ENCODE measurements at regions of chrX and their contacts with region 1.

Region 1: DNA sequence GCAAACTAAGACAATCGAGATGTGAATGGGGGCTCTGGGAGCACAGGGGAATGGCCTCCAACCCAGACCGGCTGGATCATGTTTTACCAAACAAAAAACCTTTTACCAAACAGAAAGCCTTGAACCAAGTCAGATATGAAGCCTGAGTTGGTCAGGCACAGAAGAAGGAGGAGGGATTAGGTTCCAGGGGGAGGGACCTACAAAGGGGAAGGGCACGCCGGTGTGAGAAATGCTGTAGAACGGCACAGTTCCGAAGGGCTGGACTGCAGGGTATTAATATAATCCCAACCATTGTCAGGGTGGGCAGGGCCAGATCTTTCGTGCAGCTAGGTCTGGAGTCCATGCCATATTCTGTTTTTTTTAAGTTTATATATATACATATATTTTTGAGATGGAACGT is 52.9 kb upstream of the NYX start:
- DNase-seq: no peak
- H3K4me3 ChIP-seq: no peak overlapping the region
- H3K27ac ChIP-seq: no peak overlapping the region
- H3K4me1 ChIP-seq: 0 out of 2 replicates have a peak, but pooled peaks cover 10% of the 10 kb centered on the region
- H3K27me3 ChIP-seq: no peaks in the 10 kb centered on the region
- CTCF ChIP-seq: no peak

Region 2: GRCh38 chrX:41350976-41351569 is 43.2 kb before region 1 on chrX:
- CTCF ChIA-PET with region 1: no interaction called
- POLR2A ChIA-PET with region 1: no interaction called
- intact Hi-C with region 1: loop called (anchors 5 kb)
- DNase-seq: no peak
- H3K4me3 ChIP-seq: no peak overlapping the region
- H3K27ac ChIP-seq: 0 out of 2 replicates have a peak overlapping the region, but pooled peaks have one; percentile 26
- H3K4me1 ChIP-seq: peaks cover 4% of the 10 kb centered on the region; the same call in 1 of the 2 replicates
- H3K27me3 ChIP-seq: no peaks in the 10 kb centered on the region
- CTCF ChIP-seq: no peak

Region 3: DNA sequence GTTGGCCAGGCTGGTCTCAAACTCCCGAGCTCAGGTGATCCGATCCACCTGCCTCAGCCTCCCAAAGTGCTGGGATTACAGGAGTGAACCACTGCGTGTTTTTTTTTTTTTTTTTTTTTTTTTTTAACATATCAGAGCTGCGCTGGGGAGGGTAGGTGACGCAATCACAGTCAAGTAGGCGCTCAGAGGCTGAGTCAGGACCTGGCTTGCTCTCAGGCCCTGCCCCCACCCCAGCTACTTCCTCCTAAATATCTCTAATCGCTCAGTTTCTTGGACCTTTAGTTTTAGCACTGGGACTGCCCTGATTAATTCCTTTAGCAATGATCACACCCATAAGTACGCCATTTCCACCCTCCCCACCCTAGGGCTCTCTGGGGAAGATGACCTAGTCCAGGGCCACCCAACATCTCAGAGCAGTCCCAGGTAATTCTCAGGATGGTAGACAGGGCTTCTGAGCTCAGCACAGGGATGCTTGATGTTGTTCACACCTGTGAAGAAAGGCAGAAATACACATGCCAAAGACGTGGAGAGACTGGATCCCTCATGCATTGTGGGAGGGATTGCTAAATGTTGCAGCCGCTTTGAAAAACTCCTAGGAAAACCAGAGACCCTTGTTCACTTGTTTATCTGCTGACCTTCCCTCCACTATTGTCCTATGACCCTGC is 10.1 kb before region 1 on chrX:
- CTCF ChIA-PET with region 1: interaction called, 23 read pairs
- POLR2A ChIA-PET with region 1: no interaction called
- intact Hi-C with region 1: no loop called
- DNase-seq: peak; percentile 43 to 72
- H3K4me3 ChIP-seq: no peak overlapping the region
- H3K27ac ChIP-seq: peak overlapping the region; percentile 88
- H3K4me1 ChIP-seq: peaks cover 18% of the 10 kb centered on the region
- H3K27me3 ChIP-seq: no peaks in the 10 kb centered on the region
- CTCF ChIP-seq: no peak

Measured in PC-9 (cell line).